Endothelial cell of umbilical vein (primary cell): ENCODE measurements at regions of chr5 and their contacts with region 1.

Region 1: DNA sequence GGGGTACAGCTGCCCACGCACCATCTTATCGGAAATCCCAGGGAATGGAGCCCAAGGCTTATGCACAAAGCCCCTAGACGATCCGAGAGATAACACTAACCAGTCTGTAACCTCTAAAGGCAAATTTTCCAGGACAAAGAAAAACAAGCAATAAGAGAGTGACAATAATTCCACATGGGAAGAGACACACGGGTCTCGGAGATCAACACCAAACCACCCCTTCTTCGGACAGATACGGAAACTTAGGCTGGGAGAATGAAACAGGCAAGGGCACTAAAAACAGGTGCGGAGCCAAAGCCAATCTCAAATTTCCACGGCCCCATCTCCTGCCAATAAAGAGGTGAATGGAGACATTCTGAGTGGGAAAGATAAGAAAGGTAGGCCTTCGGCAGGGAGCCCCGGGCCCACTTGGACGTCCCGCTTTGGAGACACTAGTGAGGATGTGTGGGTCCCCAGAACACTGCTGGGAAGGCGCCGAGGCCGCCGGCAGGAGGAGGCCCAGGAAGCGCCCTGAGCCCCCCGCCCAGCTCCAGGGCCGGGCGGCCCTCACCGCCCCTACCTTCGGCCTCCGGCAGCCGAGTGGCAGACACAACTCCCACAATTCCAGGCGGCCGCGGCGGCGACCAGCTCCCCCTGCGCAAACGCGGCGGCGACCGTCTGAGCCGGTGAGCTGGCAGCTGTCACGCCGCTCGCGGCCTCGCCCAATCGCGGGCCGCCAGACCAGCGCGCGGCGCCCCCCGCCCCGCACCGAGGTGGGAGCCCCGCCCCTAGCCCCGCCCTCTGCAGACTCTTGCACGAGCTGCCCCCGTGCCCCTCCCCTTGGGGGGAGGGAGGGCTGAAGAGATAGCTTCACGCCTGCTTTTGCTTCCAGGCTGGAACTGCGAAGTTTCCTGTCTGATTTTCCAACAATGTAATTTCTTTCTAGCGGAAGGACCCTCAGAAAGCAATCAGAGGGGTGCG is at the start of gene SIL1:
- DNase-seq: peak; percentile 98
- H3K4me3 ChIP-seq: peak within 1 kb of the TSS; percentile 63 to 98 (median 95)
- H3K27ac ChIP-seq: peak within 1 kb of the TSS; percentile 98
- H3K4me1 ChIP-seq: peaks cover 10% of the 10 kb centered on the region
- H3K27me3 ChIP-seq: no peaks in the 10 kb centered on the region
- CTCF ChIP-seq: no peak
- POLR2A ChIP-seq: peak; percentile 98
- total RNA-seq, gene SIL1: 35.4 and 47.6 TPM in 2 replicates

Region 2: GRCh38 chr5:139215107-139215975 is 17.4 kb after region 1 on chr5:
- CTCF ChIA-PET with region 1: interaction called, 3 read pairs
- POLR2A ChIA-PET with region 1: interaction called, 3 read pairs
- dilution Hi-C with region 1: no loop called
- intact Hi-C with region 1: loop called (anchors 1 kb)
- DNase-seq: peak; percentile 90
- H3K4me3 ChIP-seq: no peak overlapping the region
- H3K27ac ChIP-seq: no peak overlapping the region
- H3K4me1 ChIP-seq: peaks cover 12% of the 10 kb centered on the region
- H3K27me3 ChIP-seq: peaks cover 0 to 6% of the 10 kb centered on the region in 2 experiments
- CTCF ChIP-seq: no peak
- POLR2A ChIP-seq: no peak

Region 3: DNA sequence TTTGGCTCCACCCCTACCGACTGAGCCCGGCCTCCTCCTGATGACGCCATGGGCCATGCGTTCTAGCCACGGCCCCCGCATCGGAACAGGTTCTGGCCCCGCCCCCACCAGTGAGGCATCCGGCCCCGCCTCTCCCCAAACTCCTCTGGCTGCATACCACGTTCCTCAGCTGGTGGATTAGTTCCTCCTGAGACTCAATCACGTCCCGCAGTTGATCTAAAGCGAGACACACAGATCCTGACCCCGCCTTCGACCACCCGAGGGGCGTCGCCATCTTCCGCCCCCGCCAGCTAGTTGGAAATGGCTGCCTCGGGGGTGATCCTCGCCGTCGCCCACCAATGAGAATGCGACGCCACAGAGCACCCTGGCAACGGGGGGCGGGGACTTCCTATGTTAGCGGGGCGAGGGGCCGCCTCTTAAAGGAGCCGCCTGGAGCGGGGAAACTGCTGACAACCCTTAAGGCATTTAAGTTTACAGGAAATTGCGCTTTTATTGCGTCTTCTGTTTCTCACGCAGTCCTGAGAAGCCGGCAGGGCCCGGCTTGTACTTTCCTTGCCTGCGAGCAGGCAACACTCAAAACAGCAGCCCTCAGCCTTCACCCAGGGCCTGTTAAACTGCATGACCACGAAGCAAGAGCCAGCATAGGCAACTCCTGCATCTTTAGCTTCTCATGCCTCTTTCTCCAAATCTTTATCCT is 205.9 kb after region 1 on chr5 and contains the start of gene SPATA24:
- CTCF ChIA-PET with region 1: no interaction called
- POLR2A ChIA-PET with region 1: interaction called, 3 read pairs
- dilution Hi-C with region 1: no loop called
- intact Hi-C with region 1: loop called (anchors 10 kb)
- DNase-seq: peak; percentile 98
- H3K4me3 ChIP-seq: peak within 1 kb of the TSS; percentile 4 to 77 (median 48)
- H3K27ac ChIP-seq: peak within 1 kb of the TSS; percentile 67
- H3K4me1 ChIP-seq: peaks cover 14% of the 10 kb centered on the region
- H3K27me3 ChIP-seq: no peaks in the 10 kb centered on the region
- CTCF ChIP-seq: no peak
- POLR2A ChIP-seq: peak; percentile 51
- total RNA-seq, gene SPATA24: 7.8 and 7.9 TPM in 2 replicates